ENCODE measurements at regions of chrX and their contacts with region 1.

Region 1: DNA sequence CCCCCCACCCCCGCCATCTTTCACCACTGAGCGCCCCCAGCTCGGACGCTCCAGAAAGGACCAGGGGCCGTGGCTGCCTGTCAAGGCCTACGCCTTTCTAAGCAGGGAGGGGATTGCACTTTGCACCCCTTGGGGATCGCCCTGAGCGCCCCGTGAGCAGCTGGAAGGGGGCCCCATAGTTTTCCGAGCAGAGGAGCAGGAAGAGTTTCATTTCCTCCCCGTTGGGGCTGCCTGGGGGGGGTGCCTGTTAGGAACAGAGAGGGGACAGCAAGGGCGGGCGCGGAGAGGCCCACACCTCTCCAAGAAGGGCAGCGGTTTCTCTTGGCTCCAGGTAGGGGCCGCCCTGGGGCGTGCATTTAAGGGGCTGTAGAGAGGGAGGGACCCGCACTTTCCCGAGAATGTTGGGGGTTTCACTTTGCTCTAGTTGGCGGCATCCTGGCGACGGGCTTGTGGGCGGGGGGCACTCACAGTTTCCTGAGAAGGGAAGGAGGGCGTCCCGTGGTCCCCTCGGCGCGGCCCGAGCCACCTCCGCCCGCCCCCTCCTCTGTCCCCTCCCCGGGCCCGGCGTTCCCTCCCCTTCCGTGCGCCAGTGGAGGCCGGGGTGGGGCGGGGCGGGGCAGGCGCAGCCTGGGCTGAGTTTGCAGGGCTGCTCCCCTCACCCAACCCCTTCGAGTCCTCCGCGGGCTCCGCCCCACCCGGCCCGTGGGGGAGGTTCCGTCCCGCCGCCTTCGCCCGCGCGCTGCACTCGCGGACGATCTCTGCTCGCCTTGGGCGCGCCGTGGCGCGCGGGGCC is 82.3 kb upstream of the CD99 start:
- DNase-seq: peak; percentile 88 to 90 (median 90)
- ATAC-seq: peak; percentile 97
- H3K4me3 ChIP-seq: peak overlapping the region; percentile 75
- H3K27ac ChIP-seq: peak overlapping the region; percentile 70
- H3K4me1 ChIP-seq: peaks cover 3 to 19% of the 10 kb centered on the region in 2 experiments; a peak in 3 of 5 replicates
- H3K27me3 ChIP-seq: no peaks in the 10 kb centered on the region
- CTCF ChIP-seq: peak in 1 of 3 experiments; percentile 14; a peak in 1 of 6 replicates
- EP300 ChIP-seq: no peak
- POLR2A ChIP-seq: 0 out of 2 replicates have a peak, but pooled peaks have one; percentile 34
- RAD21 ChIP-seq: no peak

Region 2: GRCh38 chrX:1453951-1454785 is 1154.7 kb before region 1 on chrX:
- CTCF ChIA-PET with region 1: no interaction called
- POLR2A ChIA-PET with region 1: no interaction called
- in situ Hi-C with region 1: loop called (anchors 25 kb)
- intact Hi-C with region 1: no loop called
- DNase-seq: peak; percentile 64 to 84 (median 67)
- ATAC-seq: peak; percentile 74
- H3K4me3 ChIP-seq: no peak overlapping the region
- H3K27ac ChIP-seq: no peak overlapping the region
- H3K4me1 ChIP-seq: peaks cover 0 to 13% of the 10 kb centered on the region in 2 experiments; a peak in 2 of 5 replicates
- H3K27me3 ChIP-seq: peaks cover 0 to 17% of the 10 kb centered on the region in 2 experiments; a peak in 2 of 5 replicates
- CTCF ChIP-seq: peak; percentile 74 to 85 (median 78)
- EP300 ChIP-seq: no peak
- POLR2A ChIP-seq: no peak
- RAD21 ChIP-seq: peak; percentile 84 to 86

Region 3: DNA sequence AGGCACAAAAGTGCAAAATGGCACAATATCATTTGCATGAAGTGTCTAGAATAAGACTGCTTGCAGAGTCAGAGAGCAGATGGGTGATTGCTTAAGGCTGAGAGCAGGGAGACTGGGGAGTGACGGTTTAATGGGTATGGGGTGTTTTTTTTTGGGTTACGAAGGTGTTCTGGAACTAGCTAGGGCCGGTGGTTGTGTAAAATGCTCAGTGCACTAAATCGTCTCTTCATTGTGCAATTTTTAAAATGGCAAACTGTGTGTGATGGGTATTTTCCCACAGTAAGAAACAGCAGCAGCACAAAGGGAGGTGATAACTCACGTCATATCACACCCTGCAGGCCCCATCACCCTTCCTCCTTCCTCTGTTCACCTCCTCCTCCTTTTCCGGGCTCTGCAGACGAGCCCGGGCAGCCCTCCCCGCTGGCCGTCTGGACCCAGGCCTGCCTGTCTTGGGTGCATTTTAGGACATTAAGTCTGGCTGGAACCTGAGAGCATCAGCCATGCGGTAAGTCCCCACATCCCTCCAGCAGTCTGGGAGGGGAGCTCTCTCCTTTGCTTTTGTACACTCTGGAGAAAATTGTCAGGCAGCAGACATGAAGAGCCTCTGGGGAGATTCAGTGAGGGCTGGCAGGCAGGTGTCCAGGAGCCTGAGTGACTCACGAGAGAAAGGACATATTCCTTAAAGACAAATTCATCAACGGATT is 951.3 kb before region 1 on chrX:
- CTCF ChIA-PET with region 1: no interaction called
- POLR2A ChIA-PET with region 1: no interaction called
- in situ Hi-C with region 1: loop called (anchors 25 kb)
- intact Hi-C with region 1: no loop called
- DNase-seq: no peak
- ATAC-seq: no peak
- H3K4me3 ChIP-seq: no peak overlapping the region
- H3K27ac ChIP-seq: no peak overlapping the region
- H3K4me1 ChIP-seq: no peaks in the 10 kb centered on the region; a peak in 1 of 5 replicates
- H3K27me3 ChIP-seq: peaks cover 0 to 8% of the 10 kb centered on the region in 2 experiments; a peak in 1 of 5 replicates
- CTCF ChIP-seq: no peak
- EP300 ChIP-seq: no peak
- POLR2A ChIP-seq: no peak
- RAD21 ChIP-seq: no peak

Region 4: DNA sequence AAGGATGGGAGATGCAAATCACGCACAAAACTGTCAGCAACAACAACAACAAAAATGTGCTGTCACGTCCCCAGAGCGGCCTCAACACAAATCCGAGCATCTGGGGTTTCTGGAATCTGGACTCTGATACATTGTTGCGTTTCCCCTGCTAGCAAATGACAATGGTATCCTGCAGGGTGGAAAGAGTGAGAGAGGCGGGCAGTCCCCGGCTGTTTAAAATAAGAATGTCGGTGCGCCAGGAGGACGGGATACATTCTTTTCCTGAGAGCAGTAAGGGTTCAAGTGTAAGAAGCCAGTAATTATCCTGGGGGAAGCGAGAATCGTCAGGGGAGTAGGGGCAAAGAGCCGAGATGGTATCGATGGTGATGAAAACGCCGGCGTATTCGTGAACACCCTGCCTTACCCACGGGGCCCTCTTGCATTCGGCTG is 683.8 kb before region 1 on chrX:
- CTCF ChIA-PET with region 1: no interaction called
- POLR2A ChIA-PET with region 1: no interaction called
- in situ Hi-C with region 1: loop called (anchors 25 kb)
- intact Hi-C with region 1: no loop called
- DNase-seq: no peak
- ATAC-seq: no peak
- H3K4me3 ChIP-seq: no peak overlapping the region
- H3K27ac ChIP-seq: no peak overlapping the region
- H3K4me1 ChIP-seq: no peaks in the 10 kb centered on the region; a peak in 1 of 5 replicates
- H3K27me3 ChIP-seq: no peaks in the 10 kb centered on the region
- CTCF ChIP-seq: no peak
- EP300 ChIP-seq: no peak
- POLR2A ChIP-seq: no peak
- RAD21 ChIP-seq: no peak

Measured in K562 (cell line).